RWPE1 (cell line): ENCODE measurements at regions of chr21 and their contacts with region 1.

Region 1: DNA sequence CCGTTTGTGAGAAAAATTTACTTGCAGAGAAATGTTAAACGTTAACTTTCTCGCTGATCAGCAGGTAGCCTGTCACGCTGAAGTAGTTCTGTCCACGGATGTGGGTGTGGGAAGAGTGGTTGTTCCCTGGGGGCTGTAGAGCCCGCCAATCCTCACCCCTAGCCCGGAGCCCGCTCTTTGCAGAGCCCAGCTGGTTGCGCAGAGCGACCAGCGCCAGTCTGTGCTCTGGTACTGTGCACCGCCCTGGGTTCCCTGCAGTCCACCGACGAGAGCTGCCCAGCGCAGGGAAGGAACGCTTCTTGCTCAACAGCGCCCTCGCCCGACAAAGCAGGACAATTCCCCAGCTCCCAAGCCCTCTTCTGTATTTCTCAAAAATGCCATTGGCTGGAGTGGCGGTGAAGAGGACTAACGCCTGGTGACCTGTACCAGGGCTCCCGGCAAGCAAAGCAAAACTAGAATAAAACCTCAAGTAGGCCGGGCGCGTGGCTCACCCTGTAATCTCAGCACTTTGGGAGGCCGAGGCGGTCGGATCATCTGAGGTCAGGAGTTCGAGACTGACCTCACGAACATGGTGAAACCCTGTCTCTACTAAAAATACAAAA is 3.3 kb downstream of the RIPPLY3 start:
- DNase-seq: peak; percentile 80
- H3K27ac ChIP-seq: no peak overlapping the region
- CTCF ChIP-seq: peak; percentile 84

Region 2: DNA sequence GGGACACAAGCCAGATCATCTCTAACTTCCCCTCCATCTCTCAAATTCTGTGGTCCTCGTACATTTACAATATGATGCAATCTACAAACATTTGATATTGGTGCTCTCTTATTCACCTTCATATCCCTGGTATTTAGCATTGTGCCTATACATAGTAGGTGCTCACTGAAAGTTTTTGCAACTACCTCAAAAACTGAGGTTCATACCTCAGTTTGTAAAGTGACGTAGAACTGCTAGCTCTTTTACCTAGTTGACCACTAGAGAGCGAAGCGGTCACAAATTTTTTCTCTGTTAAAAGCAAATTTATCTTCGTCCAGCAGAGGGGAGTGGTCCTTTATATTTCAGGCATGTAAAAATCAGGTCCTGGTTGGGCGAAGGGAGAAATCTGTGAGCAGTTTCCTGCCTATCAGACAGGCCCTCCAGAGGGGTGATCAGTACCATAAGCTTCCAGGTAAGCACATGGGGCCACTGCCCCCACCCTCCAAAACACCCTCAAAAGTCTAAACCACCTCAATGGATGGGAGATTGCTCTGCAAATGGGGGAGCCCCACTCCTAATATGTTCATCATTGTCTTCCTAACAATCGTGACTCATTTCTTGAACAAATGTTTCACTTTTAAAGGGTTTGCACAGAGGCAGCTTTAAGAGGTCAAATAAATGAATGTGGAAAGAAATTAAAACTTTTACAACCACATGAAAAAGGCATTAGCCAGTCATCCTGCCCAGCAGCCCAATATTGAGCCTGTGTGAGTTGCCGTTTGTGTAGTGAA is 32.8 kb before region 1 on chr21:
- CTCF ChIA-PET with region 1: interaction called, 13 read pairs
- POLR2A ChIA-PET with region 1: no interaction called
- DNase-seq: peak; percentile 62
- H3K27ac ChIP-seq: peak overlapping the region; percentile 55
- CTCF ChIP-seq: peak; percentile 78